Activated CD8-positive, alpha-beta memory T cell treated with anti-CD3 and anti-CD28 coated beads, Interleukin-2, amount 10 ng/mL, durations not matched to agents 7 days and 5 days (primary cell): ENCODE measurements at regions of chr6 and their contacts with region 1.

Region 1: DNA sequence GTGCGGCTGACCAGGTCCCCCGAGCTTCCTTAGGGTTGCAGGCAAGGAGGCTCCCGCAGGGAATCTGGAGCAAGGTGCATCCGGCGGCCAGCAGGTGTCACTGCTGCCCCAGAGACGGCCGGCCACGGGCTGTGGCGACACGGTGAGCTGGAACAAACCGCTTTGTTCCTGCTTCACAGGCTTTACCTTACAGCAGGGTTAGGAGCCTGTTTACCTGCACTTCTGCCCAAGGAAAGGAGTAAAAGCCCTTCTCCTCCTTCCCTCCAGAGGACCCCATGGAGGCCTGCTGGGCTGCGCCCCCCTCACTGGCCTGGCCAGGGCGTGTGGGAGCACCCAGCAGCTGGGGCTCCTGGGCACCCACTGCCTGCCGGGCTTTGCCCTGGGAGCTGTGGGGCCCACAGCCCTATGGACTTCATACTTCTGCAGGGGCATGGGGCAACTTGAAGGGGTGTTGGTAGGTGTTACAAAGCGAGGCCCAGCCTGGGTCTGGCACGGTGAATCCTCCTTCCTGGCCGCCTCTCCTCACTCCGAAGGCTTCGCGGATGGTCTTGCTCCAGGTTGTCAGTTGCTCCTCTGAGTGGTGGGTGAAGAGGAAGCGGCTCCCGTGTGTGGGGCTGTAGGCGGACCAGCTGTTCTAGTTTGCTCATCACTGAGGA is 88.4 kb downstream of the CDC5L start:
- DNase-seq: peak; percentile 77
- ATAC-seq: peak; percentile 91
- H3K4me3 Mint-ChIP-seq: no peak overlapping the region
- H3K27ac Mint-ChIP-seq: no peak overlapping the region
- H3K4me1 Mint-ChIP-seq: peaks cover 7% of the 10 kb centered on the region
- H3K27me3 Mint-ChIP-seq: peaks cover 17% of the 10 kb centered on the region

Region 2: DNA sequence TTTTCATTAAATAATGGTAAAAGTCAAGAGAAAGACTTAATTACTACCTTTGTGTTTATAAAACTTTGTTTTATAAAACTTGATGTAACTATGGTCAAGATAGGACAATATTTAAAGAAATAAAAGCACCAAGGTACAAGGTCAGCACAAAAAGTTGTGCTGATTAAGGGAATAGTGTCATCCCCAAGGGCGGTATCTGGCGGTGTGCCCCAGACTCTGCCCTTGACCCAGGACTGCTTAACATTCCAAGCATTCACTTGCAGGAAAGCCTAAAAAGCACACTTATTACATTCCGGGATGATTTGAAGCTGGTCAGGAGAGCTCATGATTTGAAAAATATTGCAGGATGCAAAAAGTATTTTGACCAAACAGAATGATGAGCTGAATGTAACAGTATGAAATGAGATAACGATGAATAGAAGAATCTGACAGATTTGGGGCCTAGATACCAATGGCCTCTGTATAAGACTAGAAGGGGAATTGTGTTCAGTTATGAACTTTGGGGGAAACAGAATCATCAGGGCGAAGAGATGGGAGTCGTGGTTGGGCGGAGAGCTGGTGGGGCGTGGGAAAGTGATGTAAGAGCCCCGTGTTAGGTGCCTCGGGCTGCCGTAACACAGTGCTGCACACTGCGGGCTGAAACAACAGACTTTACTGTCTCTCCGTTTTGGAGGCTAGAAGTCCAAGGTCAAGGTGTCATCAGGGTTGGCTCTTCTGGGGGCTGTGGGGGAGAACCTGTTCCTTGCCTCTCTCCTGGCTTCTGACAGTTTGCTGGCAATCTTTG is 11.2 kb before region 1 on chr6:
- CTCF ChIA-PET with region 1: interaction called, 14 read pairs
- DNase-seq: no peak
- ATAC-seq: no peak
- H3K4me3 Mint-ChIP-seq: no peak overlapping the region
- H3K27ac Mint-ChIP-seq: no peak overlapping the region
- H3K4me1 Mint-ChIP-seq: peaks cover 5% of the 10 kb centered on the region
- H3K27me3 Mint-ChIP-seq: peaks cover 14% of the 10 kb centered on the region

Region 3: GRCh38 chr6:44567406-44567805 is 91.5 kb after region 1 on chr6:
- CTCF ChIA-PET with region 1: interaction called, 14 read pairs
- DNase-seq: no peak
- ATAC-seq: no peak
- H3K4me3 Mint-ChIP-seq: no peak overlapping the region
- H3K27ac Mint-ChIP-seq: no peak overlapping the region
- H3K4me1 Mint-ChIP-seq: peaks cover 1% of the 10 kb centered on the region
- H3K27me3 Mint-ChIP-seq: peaks cover 13% of the 10 kb centered on the region

Region 4: GRCh38 chr6:44655412-44656342 is 179.8 kb after region 1 on chr6:
- CTCF ChIA-PET with region 1: interaction called, 13 read pairs
- DNase-seq: peak; percentile 82
- ATAC-seq: peak; percentile 82
- H3K4me3 Mint-ChIP-seq: no peak overlapping the region
- H3K27ac Mint-ChIP-seq: peak overlapping the region; percentile 81
- H3K4me1 Mint-ChIP-seq: peaks cover 9% of the 10 kb centered on the region
- H3K27me3 Mint-ChIP-seq: peaks cover 3% of the 10 kb centered on the region

Region 5: GRCh38 chr6:44855562-44856411 is 379.9 kb after region 1 on chr6:
- CTCF ChIA-PET with region 1: no interaction called
- DNase-seq: no peak
- ATAC-seq: no peak
- H3K4me3 Mint-ChIP-seq: no peak overlapping the region
- H3K27ac Mint-ChIP-seq: no peak overlapping the region
- H3K4me1 Mint-ChIP-seq: no peaks in the 10 kb centered on the region
- H3K27me3 Mint-ChIP-seq: no peaks in the 10 kb centered on the region

Region 6: DNA sequence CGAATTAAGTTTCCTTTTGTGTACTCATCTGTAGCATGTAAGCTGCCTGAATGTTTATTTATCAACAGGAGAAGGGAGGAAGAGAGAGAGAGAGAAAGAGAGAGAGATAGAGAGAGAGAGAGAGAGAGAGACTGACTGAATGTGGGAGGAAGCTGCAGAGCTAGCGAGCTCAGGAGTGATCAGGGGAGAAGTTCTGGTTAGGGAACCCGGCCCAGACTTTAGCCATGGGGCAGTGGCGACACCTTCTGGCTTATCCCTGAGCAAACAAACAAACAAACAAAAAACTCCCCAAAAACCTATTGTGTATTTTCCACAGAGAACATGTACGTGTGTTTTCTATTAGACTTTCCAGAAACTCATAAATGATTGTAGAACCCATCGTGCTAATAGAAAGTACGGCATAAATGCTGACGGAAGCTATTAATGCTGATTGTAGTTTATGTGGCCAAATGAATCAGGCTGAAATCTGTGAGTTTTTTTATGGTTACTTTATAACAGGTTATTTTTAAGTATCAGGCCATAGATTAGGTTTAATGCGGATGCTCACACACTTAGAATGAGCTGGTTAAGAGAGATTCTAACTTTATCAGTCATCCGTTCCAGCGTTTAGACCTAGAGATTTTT is 1446.9 kb after region 1 on chr6:
- CTCF ChIA-PET with region 1: interaction called, 39 read pairs
- DNase-seq: peak; percentile 83
- ATAC-seq: peak; percentile 55
- H3K4me3 Mint-ChIP-seq: peak overlapping the region; percentile 30
- H3K27ac Mint-ChIP-seq: peak overlapping the region; percentile 79
- H3K4me1 Mint-ChIP-seq: peaks cover 65% of the 10 kb centered on the region
- H3K27me3 Mint-ChIP-seq: no peaks in the 10 kb centered on the region